Posterior vena cava (tissue), 2 donors: ENCODE measurements at regions of chr7 and their contacts with region 1.

Region 1: GRCh38 chr7:101138213-101138870 is 11.4 kb downstream of the SERPINE1 start:
- DNase-seq: peak; percentile 92

Region 2: DNA sequence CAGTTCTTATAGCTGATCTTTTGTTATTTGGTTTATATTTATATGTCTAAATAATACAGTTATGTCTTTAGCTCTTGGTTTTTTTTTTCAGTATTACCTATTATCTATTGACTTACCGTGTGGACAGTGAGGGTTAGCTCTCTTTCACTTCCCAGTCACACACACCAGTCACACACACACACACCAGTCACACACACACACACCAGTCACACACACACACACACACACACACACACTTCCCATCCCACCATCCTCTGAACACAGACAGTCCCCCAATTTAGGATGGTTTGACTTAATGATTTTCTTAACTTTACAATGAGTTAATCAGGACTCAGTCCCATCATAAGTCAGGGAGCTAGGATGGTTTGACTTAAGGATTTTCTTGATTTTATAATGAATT is 618.2 kb before region 1 on chr7:
- intact Hi-C with region 1: loop called in 1 of 2 experiments (anchors 10 kb)
- DNase-seq: no peak

Region 3: DNA sequence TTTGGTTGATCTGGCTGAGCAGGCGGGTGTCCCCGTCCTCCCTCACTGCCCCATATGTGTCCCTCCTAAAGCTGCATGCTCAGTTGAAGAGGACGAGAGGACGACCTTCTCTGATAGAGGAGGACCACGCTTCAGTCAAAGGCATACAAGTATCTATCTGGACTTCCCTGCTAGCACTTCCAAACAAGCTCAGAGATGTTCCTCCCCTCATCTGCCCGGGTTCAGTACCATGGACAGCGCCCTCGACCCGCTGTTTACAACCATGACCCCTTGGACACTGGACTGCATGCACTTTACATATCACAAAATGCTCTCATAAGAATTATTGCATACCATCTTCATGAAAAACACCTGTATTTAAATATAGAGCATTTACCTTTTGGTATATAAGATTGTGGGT is 80.0 kb before region 1 on chr7:
- intact Hi-C with region 1: no loop called
- DNase-seq: peak; percentile 88

Region 4: DNA sequence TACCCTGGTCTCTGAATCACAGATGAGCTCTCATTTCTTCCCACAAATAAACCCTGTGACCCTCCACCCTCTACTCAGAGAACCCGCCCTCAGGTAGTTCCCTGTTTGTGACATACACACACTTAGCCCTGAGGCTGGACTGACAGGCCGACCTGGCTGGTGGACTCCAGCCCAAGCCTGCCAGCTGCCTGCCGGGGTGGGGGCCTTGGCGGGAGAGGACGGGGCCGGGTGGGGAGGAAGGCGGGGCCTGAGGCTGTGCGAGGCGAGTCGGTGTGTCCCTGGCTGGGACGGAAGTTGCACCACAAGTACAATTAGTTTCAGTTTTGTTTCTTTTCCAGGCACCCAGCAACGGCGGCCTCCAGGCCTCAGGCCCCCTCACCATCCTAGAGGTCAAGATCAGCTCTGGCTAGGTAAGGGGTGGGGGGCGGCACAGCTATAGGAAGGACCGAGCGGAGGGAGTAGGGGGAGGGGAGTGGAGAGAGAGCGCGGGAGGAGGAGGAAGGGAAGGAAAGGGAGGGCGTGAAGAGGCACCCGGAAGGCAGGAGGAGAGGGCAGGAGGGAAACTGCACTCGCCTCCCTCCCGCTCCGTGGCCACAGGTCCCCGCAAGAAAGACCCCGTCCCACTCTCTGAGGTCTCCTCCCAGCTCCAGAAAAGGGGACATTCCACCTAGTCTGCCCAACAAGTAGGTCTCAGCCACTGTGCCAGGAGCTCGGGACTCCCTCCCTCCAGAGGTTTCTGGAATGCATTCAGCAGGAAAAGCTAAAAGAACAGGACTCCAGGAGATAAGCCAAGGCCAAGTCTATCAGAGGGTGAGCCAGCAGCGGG is 53.0 kb before region 1 on chr7 and contains the start of gene TRIM56:
- intact Hi-C with region 1: loop called in 1 of 2 experiments (anchors 5 kb)
- DNase-seq: peak; percentile 95
- total RNA-seq, gene TRIM56: 33.0 to 38.2 TPM

Region 5: GRCh38 chr7:101099969-101100781 is 38.2 kb before region 1 on chr7:
- intact Hi-C with region 1: loop called (anchors 5 kb)
- DNase-seq: peak; percentile 99

Region 6: DNA sequence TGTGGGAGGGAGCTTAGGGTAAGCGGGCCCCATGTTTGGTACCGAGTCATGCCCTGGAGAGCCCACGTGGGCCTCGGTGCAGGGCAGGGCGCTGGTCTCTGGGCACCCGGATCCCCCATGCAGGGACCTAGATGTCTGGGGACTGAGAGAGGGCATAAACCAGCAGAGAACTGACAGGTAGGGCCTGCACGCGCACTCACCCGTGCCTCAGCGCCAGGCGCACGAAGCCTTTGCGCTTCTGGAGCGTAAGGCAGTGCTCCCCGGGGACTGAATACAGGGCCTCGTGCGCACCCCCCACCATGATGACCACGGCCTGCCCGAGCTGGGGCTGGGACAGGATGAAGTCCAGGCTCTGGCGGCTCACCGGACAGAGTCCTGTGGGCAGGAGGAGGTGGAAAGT is 59.6 kb after region 1 on chr7:
- intact Hi-C with region 1: loop called in 1 of 2 experiments (anchors 10 kb)
- DNase-seq: no peak

Region 7: DNA sequence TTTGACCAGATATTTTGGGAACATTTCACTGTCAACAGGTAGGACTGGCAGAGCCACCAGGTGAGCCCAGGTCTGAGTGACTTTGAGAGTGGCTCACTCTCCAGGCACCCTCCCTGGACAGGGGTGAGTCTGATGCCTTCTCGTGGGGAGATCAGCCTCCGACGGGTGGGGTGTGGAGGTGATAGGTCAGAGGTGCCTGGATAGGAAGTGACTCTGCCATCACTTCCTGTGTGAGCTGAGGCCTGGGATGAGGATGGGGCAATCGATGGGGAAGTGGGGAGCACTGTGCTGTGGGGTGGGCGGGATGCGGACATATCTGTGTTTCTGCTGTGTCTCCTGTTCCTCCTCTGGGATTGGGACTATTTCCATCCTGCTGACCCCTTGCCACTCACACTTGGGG is 148.7 kb after region 1 on chr7:
- intact Hi-C with region 1: loop called (anchors 5 kb)
- DNase-seq: no peak